Left ventricle myocardium inferior (tissue), 1 donor: ENCODE measurements at regions of chr22 and their contacts with region 1.

Region 1: DNA sequence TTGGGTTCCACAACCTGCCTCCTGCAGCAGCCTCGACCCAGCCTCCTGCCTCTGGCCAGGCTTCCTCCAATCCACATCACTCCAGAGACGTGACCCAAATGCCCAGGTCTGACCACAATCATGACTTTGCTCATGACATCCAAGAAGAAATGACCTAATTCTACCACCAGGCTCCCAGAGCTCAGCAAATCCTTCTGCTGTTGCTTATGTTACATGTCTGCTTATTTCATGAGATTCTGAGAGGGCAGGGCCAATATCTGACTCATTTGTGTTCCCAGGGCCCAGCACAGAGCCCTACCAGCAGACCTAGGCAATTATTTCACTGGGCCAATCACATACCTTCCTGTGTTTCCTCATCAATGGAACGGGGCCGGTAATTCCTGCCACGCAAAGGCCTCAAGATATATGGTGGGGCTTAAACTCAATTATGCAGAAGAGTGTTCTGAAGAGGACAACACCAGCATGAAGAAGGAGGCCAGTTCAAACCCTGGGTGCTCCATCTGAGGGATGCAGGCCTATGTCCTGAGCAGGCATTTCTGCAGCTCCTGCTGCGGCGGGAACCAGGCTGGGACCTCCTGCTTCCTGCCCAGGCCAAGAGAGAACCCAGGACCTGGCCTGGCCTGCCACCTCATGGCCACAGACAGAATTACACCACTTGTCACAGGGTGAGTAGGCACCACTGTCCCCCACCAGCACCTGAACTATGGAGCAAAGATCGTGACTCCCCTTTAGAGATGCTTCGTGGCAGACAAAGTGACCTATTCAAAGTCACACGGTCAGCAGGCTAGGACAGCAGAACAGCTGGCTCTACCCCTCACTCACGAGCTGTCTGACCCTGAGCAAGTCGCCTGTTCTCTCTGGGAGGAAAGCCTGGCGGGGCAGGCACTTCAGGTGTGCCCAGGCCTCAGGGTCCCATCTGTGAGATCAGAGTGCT is 5.9 kb downstream of the CENPM start:
- DNase-seq: peak; percentile 85
- H3K4me3 ChIP-seq: no peak overlapping the region
- H3K27ac ChIP-seq: peak overlapping the region; percentile 35
- H3K4me1 ChIP-seq: peaks cover 25% of the 10 kb centered on the region
- H3K27me3 ChIP-seq: no peaks in the 10 kb centered on the region
- CTCF ChIP-seq: peak; percentile 96

Region 2: DNA sequence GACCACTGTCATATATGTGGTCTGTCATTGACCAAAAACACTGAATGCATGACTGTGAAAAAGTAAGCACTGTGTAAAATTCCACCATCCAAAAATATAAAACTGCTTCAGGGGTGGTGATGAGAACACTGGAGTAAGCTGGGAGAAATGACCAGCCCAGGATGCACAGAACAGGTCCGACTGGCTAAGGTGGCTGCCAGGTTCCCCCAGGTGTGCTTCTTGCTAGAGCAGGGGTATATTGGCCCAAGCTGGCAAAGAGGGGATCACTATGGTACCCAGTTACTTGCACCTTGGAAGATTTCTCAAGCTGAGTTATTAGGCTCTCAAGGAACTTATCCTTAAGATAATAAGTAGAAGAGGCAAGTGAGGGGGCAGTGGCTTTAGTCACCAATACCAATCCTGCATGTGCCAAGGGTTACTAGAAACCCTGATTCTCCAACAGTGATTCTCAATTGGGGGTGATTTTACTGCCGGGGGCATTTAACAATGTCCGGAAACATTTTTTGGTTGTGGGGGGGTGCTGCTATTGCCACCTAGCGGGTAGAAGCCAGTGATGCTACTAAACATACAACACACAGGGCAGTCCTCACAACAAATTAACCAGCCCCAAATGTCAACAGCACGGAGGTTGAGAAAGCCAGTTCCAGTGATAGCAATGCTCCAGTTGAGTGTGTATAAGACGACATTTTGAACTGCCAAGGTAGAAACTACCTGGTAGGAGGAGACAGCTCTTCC is 268.2 kb before region 1 on chr22:
- intact Hi-C with region 1: no loop called
- DNase-seq: no peak
- H3K4me3 ChIP-seq: no peak overlapping the region
- H3K27ac ChIP-seq: no peak overlapping the region
- H3K4me1 ChIP-seq: peaks cover 35% of the 10 kb centered on the region
- H3K27me3 ChIP-seq: no peaks in the 10 kb centered on the region
- CTCF ChIP-seq: peak; percentile 40

Region 3: GRCh38 chr22:41697126-41697775 is 243.8 kb before region 1 on chr22:
- intact Hi-C with region 1: loop called (anchors 5 kb)
- DNase-seq: peak; percentile 93
- H3K4me3 ChIP-seq: peak overlapping the region; percentile 54
- H3K27ac ChIP-seq: peak overlapping the region; percentile 73
- H3K4me1 ChIP-seq: peaks cover 23% of the 10 kb centered on the region
- H3K27me3 ChIP-seq: no peaks in the 10 kb centered on the region
- CTCF ChIP-seq: peak; percentile 99

Region 4: GRCh38 chr22:41746567-41747400 is 194.3 kb before region 1 on chr22:
- intact Hi-C with region 1: loop called (anchors 5 kb)
- DNase-seq: peak; percentile 51
- H3K4me3 ChIP-seq: no peak overlapping the region
- H3K27ac ChIP-seq: no peak overlapping the region
- H3K4me1 ChIP-seq: no peaks in the 10 kb centered on the region
- H3K27me3 ChIP-seq: peaks cover 34% of the 10 kb centered on the region
- CTCF ChIP-seq: peak; percentile 77

Region 5: GRCh38 chr22:41762980-41763779 is 177.9 kb before region 1 on chr22:
- intact Hi-C with region 1: no loop called
- DNase-seq: no peak
- H3K4me3 ChIP-seq: no peak overlapping the region
- H3K27ac ChIP-seq: no peak overlapping the region
- H3K4me1 ChIP-seq: no peaks in the 10 kb centered on the region
- H3K27me3 ChIP-seq: peaks cover 6% of the 10 kb centered on the region
- CTCF ChIP-seq: peak; percentile 38

Region 6: GRCh38 chr22:41822317-41823060 is 118.6 kb before region 1 on chr22:
- intact Hi-C with region 1: loop called (anchors 5 kb)
- DNase-seq: no peak
- H3K4me3 ChIP-seq: no peak overlapping the region
- H3K27ac ChIP-seq: no peak overlapping the region
- H3K4me1 ChIP-seq: peaks cover 28% of the 10 kb centered on the region
- H3K27me3 ChIP-seq: no peaks in the 10 kb centered on the region
- CTCF ChIP-seq: peak; percentile 68